ENCODE measurements at regions of chr9 and their contacts with region 1.

Region 1: DNA sequence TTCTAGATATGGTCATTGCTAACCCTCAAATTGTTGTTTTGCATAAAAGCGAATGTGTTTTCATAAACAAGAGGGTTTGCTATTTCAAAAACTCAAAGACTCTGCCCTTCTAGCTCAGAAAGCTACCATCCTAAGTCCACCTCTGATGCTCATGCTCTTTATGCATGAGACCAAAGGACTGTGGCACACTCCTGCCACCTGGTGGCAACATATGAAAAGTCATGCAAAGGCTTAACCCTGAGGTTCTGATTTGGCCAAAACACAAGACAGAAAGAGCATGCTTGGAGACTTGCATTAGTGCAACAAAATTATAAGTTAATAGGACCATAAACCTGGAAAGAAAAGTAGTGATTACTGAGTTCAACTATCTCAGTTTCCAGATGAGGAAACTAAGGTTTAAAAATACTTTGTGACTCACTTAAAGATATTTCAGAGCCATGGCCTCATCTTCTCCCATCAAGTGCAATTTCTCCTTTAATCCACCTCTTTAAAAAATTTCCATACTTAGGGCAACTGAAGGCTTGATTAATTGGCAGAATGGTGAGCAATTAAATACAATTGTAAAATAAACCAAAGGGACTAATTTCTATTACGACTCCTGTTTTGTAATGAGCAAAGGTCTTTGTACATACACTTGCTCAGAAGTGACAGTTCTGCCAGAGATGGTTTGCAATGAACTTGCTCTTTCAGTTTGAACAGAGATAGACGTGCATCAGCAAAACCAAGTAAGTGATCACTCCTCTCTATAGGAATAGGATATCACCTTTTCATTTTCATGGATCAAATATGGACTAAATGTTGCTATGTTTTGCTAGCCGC is 110.7 kb upstream of the RAD23B start:
- DNase-seq: peak; percentile 82
- H3K4me3 ChIP-seq: no peak overlapping the region
- H3K27ac ChIP-seq: no peak overlapping the region
- H3K4me1 ChIP-seq: no peaks in the 10 kb centered on the region
- H3K27me3 ChIP-seq: no peaks in the 10 kb centered on the region
- CTCF ChIP-seq: peak; percentile 86

Region 2: DNA sequence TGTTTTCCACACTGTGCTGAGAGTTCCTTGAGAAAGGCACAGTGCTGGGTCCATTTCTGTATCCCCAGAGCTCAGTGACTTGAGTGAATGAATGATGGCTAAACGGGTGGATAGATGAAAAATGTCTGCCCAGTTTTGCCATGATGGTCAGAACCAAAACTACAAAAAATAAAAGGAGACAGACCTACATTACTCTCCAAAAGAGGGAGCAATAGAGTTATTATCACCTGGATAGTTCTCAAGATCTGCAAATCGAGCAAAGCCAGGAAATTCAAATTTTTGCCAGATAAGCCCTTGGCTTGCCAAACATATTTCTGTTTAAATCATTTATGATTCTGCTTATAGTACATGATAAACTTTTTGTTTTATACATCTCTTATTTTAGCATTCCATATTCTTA is 523.6 kb before region 1 on chr9:
- intact Hi-C with region 1: loop called (anchors 10 kb)
- DNase-seq: no peak
- H3K4me3 ChIP-seq: no peak overlapping the region
- H3K27ac ChIP-seq: no peak overlapping the region
- H3K4me1 ChIP-seq: no peaks in the 10 kb centered on the region
- H3K27me3 ChIP-seq: no peaks in the 10 kb centered on the region
- CTCF ChIP-seq: no peak

Region 3: DNA sequence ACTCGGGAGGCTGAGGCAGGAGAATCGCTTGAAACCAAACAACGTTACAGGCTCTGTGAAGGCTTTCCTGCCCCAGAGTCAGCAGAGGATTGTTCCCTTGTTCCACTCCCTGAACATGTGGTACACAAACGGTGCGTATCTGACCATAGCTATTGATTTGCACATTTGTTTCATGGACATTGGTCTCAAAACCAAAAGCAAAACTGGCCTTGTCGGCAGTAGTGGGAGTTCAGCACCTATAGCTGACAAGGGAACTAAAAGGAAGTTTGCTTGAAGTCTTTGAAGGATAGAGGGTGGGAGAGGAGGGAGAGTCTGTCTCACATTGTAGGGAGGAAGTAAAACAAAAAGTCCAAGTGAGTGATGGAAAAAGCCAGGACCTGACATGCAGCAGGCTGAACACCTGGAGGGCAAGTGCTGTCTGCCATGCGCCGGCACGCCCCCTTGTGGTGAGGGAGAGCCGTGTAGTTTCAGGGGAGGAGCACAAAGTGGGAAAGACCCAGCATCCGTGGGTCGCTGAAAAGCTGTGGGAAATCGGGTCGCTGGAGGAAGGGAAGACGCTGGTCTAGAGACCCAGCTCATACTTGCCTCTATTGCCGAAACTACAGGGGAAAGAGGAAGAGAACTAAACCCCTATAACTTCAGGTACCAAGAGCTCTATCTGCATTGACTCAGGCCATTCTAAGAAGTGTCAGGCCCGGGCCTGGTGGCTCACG is 168.7 kb after region 1 on chr9:
- intact Hi-C with region 1: loop called (anchors 10 kb)
- DNase-seq: peak; percentile 83
- H3K4me3 ChIP-seq: no peak overlapping the region
- H3K27ac ChIP-seq: no peak overlapping the region
- H3K4me1 ChIP-seq: no peaks in the 10 kb centered on the region
- H3K27me3 ChIP-seq: no peaks in the 10 kb centered on the region
- CTCF ChIP-seq: peak; percentile 90